Naive thymus-derived CD4-positive, alpha-beta T cell (primary cell): ENCODE measurements at regions of chr1 and their contacts with region 1.

Region 1: DNA sequence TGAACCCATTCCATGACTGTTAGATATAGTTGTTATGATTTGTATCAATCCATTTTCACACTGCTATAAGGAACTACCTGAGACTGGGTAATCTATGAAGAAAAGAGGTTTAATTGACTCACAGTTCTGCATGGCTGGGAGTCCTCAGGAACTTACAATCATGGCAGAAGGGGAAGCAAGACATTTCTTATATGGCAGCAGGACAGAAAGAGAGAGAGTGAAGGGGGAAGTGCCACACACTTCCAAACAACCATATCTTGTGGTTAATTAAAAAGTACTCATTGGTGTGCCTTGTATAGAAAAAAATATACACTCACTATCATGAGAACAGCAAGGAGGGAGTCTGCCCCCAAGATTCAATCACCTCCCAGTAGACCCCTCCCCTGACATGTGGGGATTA is 137.6 kb upstream of the NBPF11 start:
- DNase-seq: no peak
- ATAC-seq: no peak
- H3K4me3 ChIP-seq: no peak overlapping the region
- H3K4me3 Mint-ChIP-seq: no peak overlapping the region
- H3K27ac ChIP-seq: no peak overlapping the region
- H3K27ac Mint-ChIP-seq: no peak overlapping the region
- H3K4me1 ChIP-seq: no peaks in the 10 kb centered on the region
- H3K4me1 Mint-ChIP-seq: peaks cover 0 to 4% (median 0%) of the 10 kb centered on the region in 7 donors
- H3K27me3 ChIP-seq: no peaks in the 10 kb centered on the region
- H3K27me3 Mint-ChIP-seq: peaks cover 4 to 14% (median 7%) of the 10 kb centered on the region in 5 donors

Region 2: GRCh38 chr1:147618077-147618569 is 671.5 kb before region 1 on chr1:
- CTCF ChIA-PET with region 1: no interaction called
- POLR2A ChIA-PET with region 1: no interaction called
- intact Hi-C with region 1: no loop called
- DNase-seq: peak in 2 of 9 donors; percentile 3 to 48
- ATAC-seq: peak; percentile 69
- H3K4me3 ChIP-seq: no peak overlapping the region
- H3K4me3 Mint-ChIP-seq: peak overlapping the region in 1 of 10 donors; percentile 36
- H3K27ac ChIP-seq: no peak overlapping the region
- H3K27ac Mint-ChIP-seq: peak overlapping the region; percentile 10 to 83 (median 65)
- H3K4me1 ChIP-seq: peaks cover 0 to 8% of the 10 kb centered on the region in 2 donors
- H3K4me1 Mint-ChIP-seq: peaks cover 2 to 35% (median 20%) of the 10 kb centered on the region in 7 donors
- H3K27me3 ChIP-seq: no peaks in the 10 kb centered on the region
- H3K27me3 Mint-ChIP-seq: no peaks in the 10 kb centered on the region

Region 3: GRCh38 chr1:148272901-148273300 is 16.7 kb before region 1 on chr1:
- CTCF ChIA-PET with region 1: no interaction called
- POLR2A ChIA-PET with region 1: no interaction called
- intact Hi-C with region 1: no loop called
- DNase-seq: no peak
- ATAC-seq: no peak
- H3K4me3 ChIP-seq: no peak overlapping the region
- H3K4me3 Mint-ChIP-seq: no peak overlapping the region
- H3K27ac ChIP-seq: no peak overlapping the region
- H3K27ac Mint-ChIP-seq: no peak overlapping the region
- H3K4me1 ChIP-seq: no peaks in the 10 kb centered on the region
- H3K4me1 Mint-ChIP-seq: no peaks in the 10 kb centered on the region
- H3K27me3 ChIP-seq: peaks cover 0 to 2% of the 10 kb centered on the region in 2 donors
- H3K27me3 Mint-ChIP-seq: peaks cover 33 to 47% (median 41%) of the 10 kb centered on the region in 5 donors

Region 4: GRCh38 chr1:148334339-148335130 is 44.9 kb after region 1 on chr1:
- CTCF ChIA-PET with region 1: no interaction called
- POLR2A ChIA-PET with region 1: no interaction called
- intact Hi-C with region 1: loop called (anchors 5 kb)
- DNase-seq: peak; percentile 40 to 74 (median 65)
- ATAC-seq: peak; percentile 84
- H3K4me3 ChIP-seq: peak overlapping the region; percentile 86
- H3K4me3 Mint-ChIP-seq: peak overlapping the region; percentile 84 to 99 (median 96)
- H3K27ac ChIP-seq: peak overlapping the region; percentile 78
- H3K27ac Mint-ChIP-seq: peak overlapping the region; percentile 89 to 99 (median 97)
- H3K4me1 ChIP-seq: peaks cover 5 to 12% of the 10 kb centered on the region in 2 donors
- H3K4me1 Mint-ChIP-seq: peaks cover 24 to 42% (median 34%) of the 10 kb centered on the region in 7 donors
- H3K27me3 ChIP-seq: no peaks in the 10 kb centered on the region
- H3K27me3 Mint-ChIP-seq: peaks cover 3 to 68% (median 14%) of the 10 kb centered on the region in 5 donors

Region 5: DNA sequence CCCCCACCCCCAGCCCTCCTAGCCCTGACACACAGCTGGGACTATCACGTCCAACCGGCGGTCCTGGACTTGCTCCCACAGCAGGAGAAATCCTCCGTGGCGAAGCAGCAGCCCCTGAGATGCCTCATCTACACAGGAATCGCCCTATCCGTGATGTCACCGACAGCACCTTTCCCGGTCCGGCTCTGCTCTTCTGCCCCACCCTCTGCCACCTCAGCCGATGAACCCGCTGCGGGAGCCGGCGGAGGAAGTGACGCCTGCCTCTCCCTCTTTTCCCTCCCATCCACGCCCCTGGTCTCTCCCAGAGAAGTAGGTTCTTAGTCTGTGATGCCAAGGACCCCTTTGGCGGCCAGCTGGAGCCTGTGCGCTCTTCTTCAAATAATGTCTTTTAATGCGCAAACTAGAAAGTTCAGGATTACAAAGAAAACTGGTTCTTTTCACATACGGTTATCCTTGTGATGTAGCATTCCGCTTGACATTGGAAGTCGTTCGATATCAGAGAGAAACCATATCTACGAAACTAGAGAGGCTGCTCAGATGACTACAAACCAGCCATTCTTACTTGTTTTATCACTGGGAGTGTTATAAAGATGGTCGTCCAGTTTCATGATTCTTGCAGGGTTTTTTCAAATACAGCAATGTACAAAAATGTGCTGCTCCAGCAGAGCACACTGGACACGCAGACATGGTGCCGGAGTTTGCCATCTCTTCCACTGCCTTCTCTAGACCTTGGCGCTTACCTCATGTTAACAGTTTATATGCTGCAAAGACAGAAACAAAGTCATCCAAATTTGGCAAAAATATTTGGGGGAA is 73.2 kb after region 1 on chr1:
- CTCF ChIA-PET with region 1: no interaction called
- POLR2A ChIA-PET with region 1: no interaction called
- intact Hi-C with region 1: loop called in 1 of 2 experiments (anchors 5 kb)
- DNase-seq: peak in 5 of 9 donors; percentile 16 to 48 (median 22)
- ATAC-seq: peak; percentile 29
- H3K4me3 ChIP-seq: peak overlapping the region; percentile 18
- H3K4me3 Mint-ChIP-seq: peak overlapping the region; percentile 81 to 92 (median 88)
- H3K27ac ChIP-seq: no peak overlapping the region
- H3K27ac Mint-ChIP-seq: peak overlapping the region; percentile 31 to 87 (median 51)
- H3K4me1 ChIP-seq: peaks cover 4 to 7% of the 10 kb centered on the region in 2 donors
- H3K4me1 Mint-ChIP-seq: peaks cover 20 to 45% (median 32%) of the 10 kb centered on the region in 7 donors
- H3K27me3 ChIP-seq: no peaks in the 10 kb centered on the region
- H3K27me3 Mint-ChIP-seq: peaks cover 0 to 42% (median 7%) of the 10 kb centered on the region in 5 donors